Activated CD8-positive, alpha-beta memory T cell treated with anti-CD3 and anti-CD28 coated beads, Interleukin-2, amount 10 ng/mL, durations not matched to agents 7 days and 5 days (primary cell): ENCODE measurements at regions of chr22 and their contacts with region 1.

Region 1: DNA sequence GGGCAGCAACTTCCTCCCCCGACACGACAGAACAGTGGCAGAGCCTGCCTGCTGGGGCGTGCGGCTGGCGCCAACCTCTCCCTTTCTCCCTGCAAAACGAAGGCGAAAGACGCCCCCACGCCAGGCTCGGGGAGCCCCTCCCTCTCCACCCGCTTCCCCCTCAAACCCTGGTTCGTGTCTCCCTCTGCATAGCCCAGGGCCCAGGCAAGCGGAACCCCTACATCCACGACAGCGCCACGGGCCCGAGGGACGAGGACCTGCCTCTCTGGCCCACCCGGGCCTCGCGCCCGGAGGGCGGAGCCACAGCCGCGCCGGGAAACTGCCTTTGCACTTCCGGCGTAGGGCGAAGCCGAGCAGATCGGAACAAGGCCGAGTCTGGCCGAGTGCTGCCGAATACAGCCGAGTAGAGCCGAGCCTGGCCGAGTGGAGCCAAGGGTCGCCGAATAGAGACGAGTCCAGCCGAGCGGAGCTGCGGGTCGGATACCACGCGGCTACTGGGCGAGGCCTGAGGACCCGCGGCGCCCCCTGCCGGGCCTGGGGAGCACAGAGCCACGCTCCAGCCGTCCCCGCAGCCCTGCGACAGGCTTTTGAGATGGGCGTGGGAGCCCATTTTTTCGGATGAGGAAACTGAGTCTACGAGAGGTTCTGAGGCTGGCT is 11.2 kb upstream of the C1QTNF6 start:
- DNase-seq: peak; percentile 100
- ATAC-seq: peak; percentile 97
- H3K4me3 Mint-ChIP-seq: peak overlapping the region; percentile 80
- H3K27ac Mint-ChIP-seq: peak overlapping the region; percentile 94
- H3K4me1 Mint-ChIP-seq: peaks cover 33% of the 10 kb centered on the region
- H3K27me3 Mint-ChIP-seq: no peaks in the 10 kb centered on the region

Region 2: GRCh38 chr22:37054600-37055365 is 144.4 kb before region 1 on chr22:
- CTCF ChIA-PET with region 1: interaction called, 10 read pairs
- DNase-seq: no peak
- ATAC-seq: no peak
- H3K4me3 Mint-ChIP-seq: no peak overlapping the region
- H3K27ac Mint-ChIP-seq: no peak overlapping the region
- H3K4me1 Mint-ChIP-seq: peaks cover 28% of the 10 kb centered on the region
- H3K27me3 Mint-ChIP-seq: no peaks in the 10 kb centered on the region

Region 3: GRCh38 chr22:37121887-37122591 is 77.2 kb before region 1 on chr22:
- CTCF ChIA-PET with region 1: interaction called, 31 read pairs
- DNase-seq: peak; percentile 98
- ATAC-seq: peak; percentile 97
- H3K4me3 Mint-ChIP-seq: peak overlapping the region; percentile 70
- H3K27ac Mint-ChIP-seq: peak overlapping the region; percentile 99
- H3K4me1 Mint-ChIP-seq: peaks cover 72% of the 10 kb centered on the region
- H3K27me3 Mint-ChIP-seq: no peaks in the 10 kb centered on the region

Region 4: DNA sequence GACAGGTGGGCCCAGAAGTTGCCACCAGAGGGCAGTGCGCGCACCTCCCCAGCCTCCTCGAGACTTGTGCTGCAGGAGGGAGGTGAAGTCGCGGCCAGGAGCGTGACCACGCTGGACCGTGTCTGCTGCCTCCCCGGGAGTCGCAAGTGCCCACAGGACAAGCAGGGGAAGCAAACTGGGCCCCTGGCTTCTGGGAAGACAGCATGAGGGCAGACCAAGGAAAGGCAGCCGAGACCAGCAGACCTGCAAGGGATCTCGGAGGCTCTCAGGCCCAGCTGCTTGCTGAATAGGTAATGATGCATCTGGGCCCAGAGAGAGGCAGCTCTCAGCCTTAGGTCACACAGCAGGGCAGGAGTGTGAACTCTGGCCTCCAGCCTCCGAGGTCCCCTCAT is 32.6 kb before region 1 on chr22:
- CTCF ChIA-PET with region 1: interaction called, 150 read pairs
- DNase-seq: peak; percentile 93
- ATAC-seq: peak; percentile 29
- H3K4me3 Mint-ChIP-seq: peak overlapping the region; percentile 78
- H3K27ac Mint-ChIP-seq: peak overlapping the region; percentile 99
- H3K4me1 Mint-ChIP-seq: peaks cover 93% of the 10 kb centered on the region
- H3K27me3 Mint-ChIP-seq: no peaks in the 10 kb centered on the region

Region 5: DNA sequence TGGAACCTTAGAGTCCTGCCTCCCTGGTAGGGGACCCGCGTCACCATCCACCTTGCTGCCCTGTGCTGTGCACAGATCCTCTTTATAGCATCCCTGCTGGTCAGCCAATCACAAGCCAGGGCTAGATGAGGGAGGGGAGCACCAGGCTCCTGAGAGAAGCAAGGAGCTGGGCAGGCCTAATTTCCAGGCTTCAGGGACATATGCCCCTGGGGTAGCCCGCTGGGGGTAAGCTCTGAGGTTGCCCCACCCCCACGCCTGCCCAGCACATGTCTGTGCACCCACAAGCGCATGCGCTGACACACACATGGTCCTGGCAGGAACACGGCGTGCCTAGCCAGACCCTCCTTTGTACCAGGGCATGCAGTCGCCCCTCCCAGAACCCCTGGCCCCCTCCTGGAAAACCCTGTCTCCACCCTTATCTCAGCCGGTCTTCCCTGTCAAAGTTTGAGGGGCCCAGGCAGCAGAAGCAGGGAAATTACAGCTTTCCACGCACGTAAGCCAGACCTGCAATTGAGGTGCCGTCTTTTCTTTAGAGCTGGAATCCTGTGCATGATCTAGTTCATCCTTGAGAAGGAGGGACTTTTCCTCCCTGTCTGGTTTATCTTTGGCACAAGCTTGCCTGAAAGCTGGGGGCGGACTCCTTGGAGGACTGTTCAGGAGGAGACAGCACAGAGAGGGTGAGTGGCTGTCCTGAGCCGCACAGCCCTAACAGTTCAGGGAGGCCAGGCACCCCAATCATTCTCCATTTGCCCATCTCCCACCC is 11.0 kb after region 1 on chr22:
- CTCF ChIA-PET with region 1: interaction called, 62 read pairs
- DNase-seq: no peak
- ATAC-seq: no peak
- H3K4me3 Mint-ChIP-seq: no peak overlapping the region
- H3K27ac Mint-ChIP-seq: no peak overlapping the region
- H3K4me1 Mint-ChIP-seq: no peaks in the 10 kb centered on the region
- H3K27me3 Mint-ChIP-seq: no peaks in the 10 kb centered on the region

Region 6: GRCh38 chr22:37229805-37230672 is 30.8 kb after region 1 on chr22:
- CTCF ChIA-PET with region 1: interaction called, 28 read pairs
- DNase-seq: peak; percentile 97
- ATAC-seq: peak; percentile 77
- H3K4me3 Mint-ChIP-seq: peak overlapping the region; percentile 57
- H3K27ac Mint-ChIP-seq: peak overlapping the region; percentile 97
- H3K4me1 Mint-ChIP-seq: peaks cover 90% of the 10 kb centered on the region
- H3K27me3 Mint-ChIP-seq: no peaks in the 10 kb centered on the region

Region 7: GRCh38 chr22:37260901-37261336 is 61.7 kb after region 1 on chr22:
- CTCF ChIA-PET with region 1: interaction called, 16 read pairs
- DNase-seq: peak; percentile 75
- ATAC-seq: peak; percentile 77
- H3K4me3 Mint-ChIP-seq: no peak overlapping the region
- H3K27ac Mint-ChIP-seq: peak overlapping the region; percentile 42
- H3K4me1 Mint-ChIP-seq: peaks cover 23% of the 10 kb centered on the region
- H3K27me3 Mint-ChIP-seq: peaks cover 6% of the 10 kb centered on the region

Region 8: DNA sequence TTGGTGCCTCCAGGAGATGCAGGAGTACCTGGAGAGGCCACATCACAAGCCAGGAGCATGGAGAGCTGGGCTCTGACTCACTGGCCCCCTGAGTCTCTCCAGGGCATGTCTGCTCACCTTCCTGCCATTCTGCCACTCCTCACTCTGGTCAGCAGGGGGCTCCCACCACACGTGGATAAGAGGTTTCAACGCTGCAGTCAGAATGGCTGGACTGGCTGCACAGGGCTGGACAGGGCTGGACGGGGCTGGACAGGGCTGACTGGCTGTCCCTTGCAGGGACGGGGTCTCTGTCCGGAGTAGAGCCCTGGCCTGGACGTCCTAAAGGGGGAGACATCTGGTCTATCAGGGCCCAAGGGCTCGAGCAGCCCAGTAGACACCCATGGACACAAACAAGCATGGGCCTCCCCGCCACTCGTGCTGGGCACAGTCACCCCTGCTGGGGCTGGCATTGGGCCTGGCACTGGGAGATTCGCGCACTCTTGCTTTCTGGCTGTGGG is 117.7 kb after region 1 on chr22:
- CTCF ChIA-PET with region 1: no interaction called
- DNase-seq: peak; percentile 85
- ATAC-seq: peak; percentile 83
- H3K4me3 Mint-ChIP-seq: no peak overlapping the region
- H3K27ac Mint-ChIP-seq: no peak overlapping the region
- H3K4me1 Mint-ChIP-seq: peaks cover 42% of the 10 kb centered on the region
- H3K27me3 Mint-ChIP-seq: peaks cover 11% of the 10 kb centered on the region